ENCODE measurements at regions of chr11 and their contacts with region 1.

Region 1: GRCh38 chr11:34051349-34052035 is at the start of gene CAPRIN1:
- DNase-seq: peak; percentile 65
- ATAC-seq: peak; percentile 82
- H3K4me3 ChIP-seq: peak within 1 kb of the TSS; percentile 96
- H3K27ac ChIP-seq: peak within 1 kb of the TSS; percentile 91
- H3K4me1 ChIP-seq: no peaks in the 10 kb centered on the region; the same call in 1 of the 2 replicates
- H3K27me3 ChIP-seq: no peaks in the 10 kb centered on the region
- CTCF ChIP-seq: no peak
- EP300 ChIP-seq: no peak
- POLR2A ChIP-seq: peak; percentile 93
- RAD21 ChIP-seq: no peak
- polyA plus RNA-seq, gene CAPRIN1: 50.4 to 51.8 TPM

Region 2: DNA sequence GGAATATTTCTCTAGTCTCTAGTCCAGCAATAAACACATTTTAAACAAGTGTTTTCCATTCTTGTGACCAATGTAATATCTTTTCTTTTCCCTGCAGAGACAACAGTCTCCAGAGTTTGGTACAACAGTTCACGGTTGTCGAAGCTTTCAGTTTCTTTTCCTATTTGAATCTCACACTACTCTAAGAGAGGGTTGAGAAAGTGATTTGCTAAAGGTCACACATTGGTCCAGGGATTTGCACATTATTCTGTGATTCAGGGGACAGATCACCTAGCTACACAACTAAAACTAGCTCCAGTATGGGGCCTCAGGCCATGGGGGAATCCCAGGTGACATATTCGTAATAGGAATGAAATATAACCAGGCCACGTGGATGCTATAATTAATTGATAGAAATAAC is 661.9 kb before region 1 on chr11:
- CTCF ChIA-PET with region 1: no interaction called
- POLR2A ChIA-PET with region 1: no interaction called
- RAD21 ChIA-PET with region 1: no interaction called
- SMC1A ChIA-PET with region 1: no interaction called
- in situ Hi-C with region 1: no loop called
- intact Hi-C with region 1: loop called (anchors 10 kb)
- DNase-seq: peak; percentile 45
- ATAC-seq: peak; percentile 80
- H3K4me3 ChIP-seq: peak overlapping the region; percentile 45; the same call in 1 of the 2 replicates
- H3K27ac ChIP-seq: peak overlapping the region; percentile 85
- H3K4me1 ChIP-seq: peaks cover 28% of the 10 kb centered on the region
- H3K27me3 ChIP-seq: no peaks in the 10 kb centered on the region
- CTCF ChIP-seq: no peak
- EP300 ChIP-seq: no peak
- POLR2A ChIP-seq: no peak
- RAD21 ChIP-seq: no peak

Region 3: DNA sequence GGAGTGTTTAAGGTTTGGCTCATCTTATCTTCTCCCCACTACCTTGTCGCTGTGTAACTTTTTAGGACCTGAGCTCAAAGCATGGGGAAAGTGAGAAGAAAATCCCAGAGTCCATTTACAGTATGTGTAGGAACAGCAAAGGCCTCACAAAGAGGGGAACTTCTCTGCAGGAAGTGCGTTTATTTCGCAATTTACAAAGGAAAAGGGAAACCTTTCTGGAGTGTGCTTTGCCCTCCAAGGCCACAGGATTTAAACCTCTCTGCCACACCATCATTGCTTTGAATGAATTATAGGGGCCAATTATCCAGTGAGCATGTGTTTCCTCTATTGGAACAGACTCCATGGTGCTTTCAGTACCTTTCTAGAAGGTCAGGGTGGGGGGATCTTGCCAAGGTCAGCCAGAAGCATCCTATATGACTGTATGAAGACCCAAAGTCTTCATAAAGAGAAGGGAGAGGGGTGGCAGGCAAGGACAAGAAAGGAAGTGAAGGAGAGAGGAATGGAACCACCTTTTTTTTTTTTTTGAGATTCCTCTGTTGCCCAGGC is 91.6 kb before region 1 on chr11:
- CTCF ChIA-PET with region 1: no interaction called
- POLR2A ChIA-PET with region 1: no interaction called
- RAD21 ChIA-PET with region 1: no interaction called
- SMC1A ChIA-PET with region 1: no interaction called
- in situ Hi-C with region 1: no loop called
- intact Hi-C with region 1: no loop called
- DNase-seq: no peak
- ATAC-seq: no peak
- H3K4me3 ChIP-seq: no peak overlapping the region
- H3K27ac ChIP-seq: no peak overlapping the region
- H3K4me1 ChIP-seq: no peaks in the 10 kb centered on the region
- H3K27me3 ChIP-seq: no peaks in the 10 kb centered on the region
- CTCF ChIP-seq: no peak
- EP300 ChIP-seq: no peak
- POLR2A ChIP-seq: no peak
- RAD21 ChIP-seq: no peak

Region 4: DNA sequence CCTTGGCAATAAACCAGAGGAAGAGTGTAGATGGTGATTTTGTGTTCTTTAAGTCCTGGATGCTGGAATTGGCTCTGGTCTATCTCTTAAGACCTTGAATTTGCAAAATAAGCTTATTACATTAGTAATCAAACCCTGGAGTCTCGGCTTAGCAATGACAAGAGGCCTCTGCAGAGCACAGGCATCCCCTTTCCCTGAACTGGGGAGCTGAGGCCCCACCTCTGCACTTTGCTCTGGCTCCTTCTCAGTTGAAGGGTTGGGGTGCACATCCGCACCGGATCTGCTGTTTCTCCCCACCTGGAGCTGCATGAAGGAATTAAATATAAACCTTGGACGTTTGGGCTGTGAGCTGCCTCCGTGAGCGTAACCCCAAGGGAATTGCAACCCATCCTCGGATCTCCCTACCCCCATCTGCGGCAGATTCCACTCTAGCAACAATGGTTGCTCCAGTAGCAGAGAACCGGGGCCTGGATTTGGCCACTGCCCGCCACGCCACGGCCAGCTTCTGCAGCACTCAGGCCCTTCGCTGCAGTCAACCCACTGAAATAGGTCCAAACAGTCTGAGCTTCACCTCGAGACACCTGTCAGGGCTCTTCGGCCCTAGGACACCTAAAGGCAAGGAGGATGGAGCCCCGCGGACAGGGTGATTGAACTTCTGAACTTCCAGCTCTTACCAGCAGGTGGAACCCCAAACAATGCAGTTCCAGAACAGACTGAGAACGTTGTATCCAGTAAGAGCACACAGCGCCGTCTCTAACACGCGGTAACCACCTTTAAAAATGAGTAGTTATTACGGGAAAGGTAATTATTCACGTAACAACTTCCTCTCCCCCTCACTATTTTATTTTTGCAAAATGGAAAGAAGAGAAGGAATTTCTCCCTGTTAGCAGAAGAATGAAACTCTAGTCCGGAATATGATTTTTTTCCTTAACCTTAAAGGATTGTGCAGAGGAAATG is 54.7 kb before region 1 on chr11:
- CTCF ChIA-PET with region 1: interaction called, 5 read pairs
- POLR2A ChIA-PET with region 1: no interaction called
- RAD21 ChIA-PET with region 1: interaction called, 5 read pairs
- SMC1A ChIA-PET with region 1: interaction called, 5 read pairs
- in situ Hi-C with region 1: no loop called
- intact Hi-C with region 1: loop called (anchors 1 kb)
- DNase-seq: peak; percentile 49
- ATAC-seq: peak; percentile 96
- H3K4me3 ChIP-seq: no peak overlapping the region; the same call in 1 of the 2 replicates
- H3K27ac ChIP-seq: no peak overlapping the region
- H3K4me1 ChIP-seq: peaks cover 25% of the 10 kb centered on the region
- H3K27me3 ChIP-seq: peaks cover 3 to 5% of the 10 kb centered on the region in 2 experiments; a peak in 3 of 4 replicates
- CTCF ChIP-seq: peak; percentile 82 to 89 (median 84); a peak in 5 of 6 replicates
- EP300 ChIP-seq: no peak
- POLR2A ChIP-seq: no peak
- RAD21 ChIP-seq: peak; percentile 87

Region 5: DNA sequence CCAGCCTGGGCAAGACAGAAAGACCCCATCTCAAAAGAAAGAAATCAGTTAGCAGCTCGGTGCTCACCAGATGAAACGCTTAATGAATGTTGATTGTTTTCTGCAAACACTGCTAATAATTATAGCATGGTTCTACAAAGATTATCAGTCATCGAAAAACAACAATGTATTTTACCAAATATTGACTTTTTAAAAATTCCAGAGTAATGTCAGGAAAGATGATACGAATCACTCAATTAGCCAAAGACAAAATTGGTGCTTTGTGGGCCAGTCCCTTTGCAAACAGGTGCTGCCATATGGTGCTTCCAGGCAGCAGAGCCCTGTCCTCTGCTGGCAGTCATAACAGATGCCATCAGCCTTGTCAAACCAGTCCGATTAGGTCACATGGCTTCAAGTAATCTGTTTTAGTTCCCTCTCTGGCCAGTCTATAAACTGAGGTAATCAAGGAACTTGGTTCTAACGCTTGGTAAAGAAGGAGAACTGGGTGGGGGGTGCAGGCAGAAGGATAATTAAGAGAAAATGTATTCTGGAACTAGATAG is 49.2 kb before region 1 on chr11:
- CTCF ChIA-PET with region 1: interaction called, 5 read pairs
- POLR2A ChIA-PET with region 1: no interaction called
- RAD21 ChIA-PET with region 1: interaction called, 5 read pairs
- SMC1A ChIA-PET with region 1: interaction called, 5 read pairs
- in situ Hi-C with region 1: no loop called
- intact Hi-C with region 1: loop called (anchors 1 kb)
- DNase-seq: no peak
- ATAC-seq: no peak
- H3K4me3 ChIP-seq: no peak overlapping the region
- H3K27ac ChIP-seq: no peak overlapping the region
- H3K4me1 ChIP-seq: peaks cover 25% of the 10 kb centered on the region
- H3K27me3 ChIP-seq: no peaks in the 10 kb centered on the region; a peak in 2 of 4 replicates
- CTCF ChIP-seq: no peak
- EP300 ChIP-seq: no peak
- POLR2A ChIP-seq: no peak
- RAD21 ChIP-seq: no peak

Region 6: GRCh38 chr11:34068111-34068510 is 16.6 kb after region 1 on chr11:
- CTCF ChIA-PET with region 1: interaction called, 3 read pairs
- POLR2A ChIA-PET with region 1: interaction called, 3 read pairs
- RAD21 ChIA-PET with region 1: interaction called, 3 read pairs
- SMC1A ChIA-PET with region 1: interaction called, 18 read pairs
- in situ Hi-C with region 1: no loop called
- intact Hi-C with region 1: loop called (anchors 2 kb)
- DNase-seq: no peak
- ATAC-seq: peak; percentile 64
- H3K4me3 ChIP-seq: no peak overlapping the region
- H3K27ac ChIP-seq: peak overlapping the region; percentile 45
- H3K4me1 ChIP-seq: peaks cover 31% of the 10 kb centered on the region
- H3K27me3 ChIP-seq: no peaks in the 10 kb centered on the region
- CTCF ChIP-seq: no peak
- EP300 ChIP-seq: no peak
- POLR2A ChIP-seq: no peak
- RAD21 ChIP-seq: no peak

Region 7: DNA sequence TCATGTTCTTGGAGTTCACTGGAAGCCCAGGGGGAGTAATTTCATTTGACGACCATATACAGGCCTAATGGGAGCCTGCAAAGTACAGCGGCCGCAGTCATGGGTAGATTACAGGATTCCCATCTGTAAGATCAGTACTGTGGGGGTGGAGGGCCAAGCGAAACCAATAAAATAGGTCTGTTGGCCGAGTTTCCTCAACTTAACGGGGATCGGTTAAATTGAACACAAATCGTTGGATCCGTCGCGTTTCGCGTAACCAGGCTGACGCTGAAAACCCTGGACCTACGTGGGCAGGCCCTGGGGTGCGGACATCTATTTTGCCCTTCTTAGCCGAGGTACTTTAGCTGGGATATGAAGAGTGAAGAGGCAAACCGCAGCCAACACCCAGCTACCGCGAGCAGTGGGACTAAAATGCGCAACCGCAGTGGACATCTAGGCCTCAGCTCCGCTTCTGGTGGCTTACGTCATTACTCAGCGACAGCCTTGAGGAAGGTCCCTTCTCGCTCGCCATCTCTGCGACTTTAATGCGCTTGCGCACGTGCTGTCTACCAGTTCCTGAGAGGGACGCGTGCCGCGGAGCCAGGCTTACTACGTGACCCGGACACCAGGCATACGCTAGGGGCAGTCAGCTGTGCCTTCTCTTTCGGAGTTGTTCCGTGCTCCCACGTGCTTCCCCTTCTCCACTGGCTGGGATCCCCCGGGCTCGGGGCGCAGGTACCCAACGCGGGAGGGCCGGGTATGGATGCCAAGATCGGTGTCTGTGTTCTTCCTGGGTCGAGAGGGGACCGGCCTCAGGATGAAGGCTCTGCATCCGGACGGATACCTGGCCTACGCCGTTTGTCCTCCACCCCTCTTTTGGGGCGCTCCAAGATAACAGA is 53.8 kb after region 1 on chr11 and contains the start of gene NAT10:
- CTCF ChIA-PET with region 1: interaction called, 5 read pairs
- POLR2A ChIA-PET with region 1: interaction called, 14 read pairs
- RAD21 ChIA-PET with region 1: interaction called, 8 read pairs
- SMC1A ChIA-PET with region 1: interaction called, 8 read pairs
- in situ Hi-C with region 1: no loop called
- intact Hi-C with region 1: loop called (anchors 1 kb)
- DNase-seq: peak; percentile 99
- ATAC-seq: peak; percentile 94
- H3K4me3 ChIP-seq: peak within 1 kb of the TSS; percentile 95
- H3K27ac ChIP-seq: peak within 1 kb of the TSS; percentile 89
- H3K4me1 ChIP-seq: peaks cover 15% of the 10 kb centered on the region
- H3K27me3 ChIP-seq: no peaks in the 10 kb centered on the region
- CTCF ChIP-seq: 0 out of 6 replicates have a peak, but pooled peaks of 1 of the 3 experiments have one; percentile 17
- EP300 ChIP-seq: peak in 1 of 2 experiments; percentile 73; a peak in 2 of 4 replicates
- POLR2A ChIP-seq: peak; percentile 96
- RAD21 ChIP-seq: 0 out of 2 replicates have a peak, but pooled peaks have one; percentile 7
- polyA plus RNA-seq, gene NAT10: 45.1 to 72.5 TPM

Measured in GM12878 (cell line).